Activated CD4-positive, alpha-beta memory T cell treated with anti-CD3 and anti-CD28 coated beads, Interleukin-2, amount 10 ng/mL, durations not matched to agents 7 days and 5 days (primary cell): ENCODE measurements at regions of chr12 and their contacts with region 1.

Region 1: GRCh38 chr12:56152318-56153033 is at the start of gene MYL6B:
- DNase-seq: peak; percentile 97
- H3K4me3 Mint-ChIP-seq: peak within 1 kb of the TSS; percentile 94
- H3K27ac Mint-ChIP-seq: peak within 1 kb of the TSS; percentile 100
- H3K4me1 Mint-ChIP-seq: peaks cover 54% of the 10 kb centered on the region
- H3K27me3 Mint-ChIP-seq: no peaks in the 10 kb centered on the region
- total RNA-seq, gene MYL6B: 60.4 to 63.2 TPM

Region 2: DNA sequence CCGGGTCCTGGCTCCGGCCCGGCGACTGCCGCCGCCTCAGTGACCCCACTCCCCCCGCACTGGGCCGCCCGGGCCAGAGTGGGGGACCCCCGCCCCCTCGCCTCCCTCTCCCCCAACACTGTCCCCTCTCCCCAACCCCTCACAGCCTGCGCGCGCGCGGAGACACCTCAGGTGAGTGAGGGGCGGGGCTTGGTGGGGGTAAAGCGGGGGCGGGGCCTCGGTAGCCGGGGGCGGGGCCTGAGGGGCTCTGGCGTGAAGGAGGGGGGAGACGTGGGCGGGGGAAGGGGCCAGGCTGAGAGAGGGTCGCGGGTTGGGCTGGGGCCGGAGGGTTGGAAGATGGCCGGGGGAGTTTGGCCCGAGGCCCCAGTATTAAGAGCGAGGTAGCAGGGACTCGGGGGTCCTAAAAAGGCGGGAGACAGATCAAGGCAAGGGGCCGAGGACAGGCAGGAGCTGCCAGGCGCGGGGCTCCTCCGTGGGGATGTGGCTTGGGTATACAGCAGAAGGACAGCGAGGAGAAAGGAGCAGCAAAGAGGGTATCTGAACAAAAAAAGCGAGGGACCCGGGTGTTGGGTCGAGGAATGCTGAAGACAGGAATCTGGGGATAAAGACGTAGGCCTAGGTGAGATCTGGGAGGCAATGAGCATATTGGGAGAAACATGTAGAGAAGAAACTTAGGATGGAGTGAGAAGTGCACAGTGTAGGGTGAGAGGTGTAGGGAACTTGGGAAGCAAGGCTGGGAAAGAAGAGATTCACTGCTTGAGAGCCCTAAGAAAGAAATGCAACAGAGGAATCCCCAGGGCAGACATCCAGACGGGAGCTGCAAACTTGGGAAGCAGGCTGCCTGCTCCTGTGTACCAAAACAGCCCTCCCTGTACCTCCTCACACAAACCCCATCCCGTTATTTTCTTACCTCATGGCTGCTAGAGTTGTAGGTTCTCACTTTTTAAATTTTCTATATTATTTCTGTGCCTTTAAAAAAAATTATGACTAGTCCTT is 144.6 kb before region 1 on chr12:
- CTCF ChIA-PET with region 1: no interaction called
- POLR2A ChIA-PET with region 1: no interaction called
- DNase-seq: peak; percentile 73
- H3K4me3 Mint-ChIP-seq: peak overlapping the region; percentile 86
- H3K27ac Mint-ChIP-seq: peak overlapping the region; percentile 74
- H3K4me1 Mint-ChIP-seq: peaks cover 29% of the 10 kb centered on the region
- H3K27me3 Mint-ChIP-seq: no peaks in the 10 kb centered on the region

Region 3: GRCh38 chr12:56071648-56072047 is 80.8 kb before region 1 on chr12:
- CTCF ChIA-PET with region 1: no interaction called
- POLR2A ChIA-PET with region 1: no interaction called
- DNase-seq: no peak
- H3K4me3 Mint-ChIP-seq: no peak overlapping the region
- H3K27ac Mint-ChIP-seq: no peak overlapping the region
- H3K4me1 Mint-ChIP-seq: peaks cover 7% of the 10 kb centered on the region
- H3K27me3 Mint-ChIP-seq: peaks cover 7% of the 10 kb centered on the region

Region 4: DNA sequence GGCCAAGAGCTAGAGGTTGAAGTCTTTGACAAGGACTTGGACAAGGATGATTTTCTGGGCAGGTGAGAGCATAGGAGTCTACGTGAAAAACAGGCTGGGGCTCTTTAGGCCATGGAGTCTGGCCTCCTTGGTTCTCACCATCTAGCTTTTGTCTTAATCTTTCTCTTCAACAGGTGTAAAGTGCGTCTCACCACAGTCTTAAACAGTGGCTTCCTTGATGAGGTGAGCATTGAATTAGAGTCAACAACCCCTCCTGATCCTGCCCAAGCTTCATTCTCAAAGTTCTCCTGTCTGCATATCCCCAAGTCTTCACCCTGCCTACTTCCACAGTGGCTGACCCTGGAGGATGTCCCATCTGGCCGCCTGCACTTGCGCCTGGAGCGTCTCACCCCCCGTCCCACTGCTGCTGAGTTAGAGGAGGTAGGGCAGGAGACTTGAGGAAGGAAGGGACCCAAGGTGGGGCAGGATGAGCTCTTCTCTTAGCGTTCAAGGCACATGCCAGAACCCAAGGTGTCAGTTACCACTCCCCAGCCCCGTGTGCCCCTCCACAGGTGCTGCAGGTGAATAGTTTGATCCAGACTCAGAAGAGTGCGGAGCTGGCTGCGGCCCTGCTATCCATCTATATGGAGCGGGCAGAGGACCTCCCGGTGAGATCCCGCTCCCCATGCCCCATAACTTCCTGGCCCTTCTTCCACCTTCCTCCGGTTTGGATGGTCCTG is 14.5 kb before region 1 on chr12:
- CTCF ChIA-PET with region 1: interaction called, 14 read pairs
- POLR2A ChIA-PET with region 1: interaction called, 18 read pairs
- DNase-seq: no peak
- H3K4me3 Mint-ChIP-seq: no peak overlapping the region
- H3K27ac Mint-ChIP-seq: peak overlapping the region; percentile 78
- H3K4me1 Mint-ChIP-seq: peaks cover 73% of the 10 kb centered on the region
- H3K27me3 Mint-ChIP-seq: no peaks in the 10 kb centered on the region